Gastrocnemius medialis (tissue), 4 donors: ENCODE measurements at regions of chr9 and their contacts with region 1.

Region 1: DNA sequence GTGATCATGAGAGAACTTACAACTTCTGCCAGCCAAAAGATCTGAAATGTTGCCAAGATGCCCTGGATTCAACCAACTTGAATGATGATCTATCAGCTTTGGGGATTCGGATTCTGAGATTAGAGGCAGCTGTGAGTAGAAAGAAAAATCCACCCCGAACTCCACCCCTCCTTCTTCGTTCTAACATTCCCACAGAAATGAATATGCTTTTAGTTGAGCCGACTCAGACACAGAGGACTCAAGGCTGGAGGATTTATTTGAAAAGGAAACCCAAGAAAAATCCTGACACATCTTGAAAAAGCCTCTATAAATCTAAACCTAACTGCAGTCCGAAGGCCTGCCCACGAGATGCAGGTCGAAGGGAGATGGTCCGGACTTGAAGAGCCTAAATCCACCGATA is 275.0 kb downstream of the GAS1 start:
- DNase-seq: no peak
- ATAC-seq: no peak
- H3K4me3 ChIP-seq: no peak overlapping the region
- H3K27ac ChIP-seq: no peak overlapping the region
- H3K4me1 ChIP-seq: no peaks in the 10 kb centered on the region
- H3K27me3 ChIP-seq: no peaks in the 10 kb centered on the region
- CTCF ChIP-seq: no peak
- POLR2A ChIP-seq: no peak

Region 2: GRCh38 chr9:87039809-87040392 is 367.6 kb after region 1 on chr9:
- in situ Hi-C with region 1: no loop called
- intact Hi-C with region 1: loop called (anchors 10 kb)
- DNase-seq: no peak
- ATAC-seq: no peak
- H3K4me3 ChIP-seq: no peak overlapping the region
- H3K27ac ChIP-seq: no peak overlapping the region
- H3K4me1 ChIP-seq: no peaks in the 10 kb centered on the region
- H3K27me3 ChIP-seq: no peaks in the 10 kb centered on the region
- CTCF ChIP-seq: no peak
- POLR2A ChIP-seq: no peak